Activated naive CD4-positive, alpha-beta T cell treated with anti-CD3 and anti-CD28 coated beads for 36 hours (primary cell): ENCODE measurements at regions of chr12 and their contacts with region 1.

Region 1: GRCh38 chr12:6533923-6534694 is at the start of gene GAPDH:
- DNase-seq: peak; percentile 90
- H3K4me3 Mint-ChIP-seq: peak within 1 kb of the TSS; percentile 94
- H3K27ac Mint-ChIP-seq: peak within 1 kb of the TSS; percentile 99
- H3K4me1 Mint-ChIP-seq: peaks cover 41% of the 10 kb centered on the region
- H3K27me3 Mint-ChIP-seq: no peaks in the 10 kb centered on the region
- total RNA-seq, gene GAPDH: 6,537 to 6,787 TPM

Region 2: GRCh38 chr12:5614256-5614655 is 919.9 kb before region 1 on chr12:
- CTCF ChIA-PET with region 1: no interaction called
- intact Hi-C with region 1: no loop called
- DNase-seq: no peak
- H3K4me3 Mint-ChIP-seq: no peak overlapping the region
- H3K27ac Mint-ChIP-seq: no peak overlapping the region
- H3K4me1 Mint-ChIP-seq: no peaks in the 10 kb centered on the region
- H3K27me3 Mint-ChIP-seq: peaks cover 2% of the 10 kb centered on the region

Region 3: GRCh38 chr12:6430124-6430989 is 103.8 kb before region 1 on chr12:
- CTCF ChIA-PET with region 1: interaction called, 35 read pairs
- intact Hi-C with region 1: loop called (anchors 1 kb)
- DNase-seq: peak; percentile 78
- H3K4me3 Mint-ChIP-seq: peak overlapping the region; percentile 46
- H3K27ac Mint-ChIP-seq: peak overlapping the region; percentile 84
- H3K4me1 Mint-ChIP-seq: peaks cover 85% of the 10 kb centered on the region
- H3K27me3 Mint-ChIP-seq: no peaks in the 10 kb centered on the region

Region 4: GRCh38 chr12:6470375-6471163 is 63.5 kb before region 1 on chr12 and contains the start of gene VAMP1:
- CTCF ChIA-PET with region 1: interaction called, 6 read pairs
- intact Hi-C with region 1: loop called (anchors 1 kb)
- DNase-seq: peak; percentile 99
- H3K4me3 Mint-ChIP-seq: peak within 1 kb of the TSS; percentile 91
- H3K27ac Mint-ChIP-seq: peak within 1 kb of the TSS; percentile 90
- H3K4me1 Mint-ChIP-seq: peaks cover 53% of the 10 kb centered on the region
- H3K27me3 Mint-ChIP-seq: no peaks in the 10 kb centered on the region
- total RNA-seq, gene VAMP1: 31.9 to 33.5 TPM

Region 5: DNA sequence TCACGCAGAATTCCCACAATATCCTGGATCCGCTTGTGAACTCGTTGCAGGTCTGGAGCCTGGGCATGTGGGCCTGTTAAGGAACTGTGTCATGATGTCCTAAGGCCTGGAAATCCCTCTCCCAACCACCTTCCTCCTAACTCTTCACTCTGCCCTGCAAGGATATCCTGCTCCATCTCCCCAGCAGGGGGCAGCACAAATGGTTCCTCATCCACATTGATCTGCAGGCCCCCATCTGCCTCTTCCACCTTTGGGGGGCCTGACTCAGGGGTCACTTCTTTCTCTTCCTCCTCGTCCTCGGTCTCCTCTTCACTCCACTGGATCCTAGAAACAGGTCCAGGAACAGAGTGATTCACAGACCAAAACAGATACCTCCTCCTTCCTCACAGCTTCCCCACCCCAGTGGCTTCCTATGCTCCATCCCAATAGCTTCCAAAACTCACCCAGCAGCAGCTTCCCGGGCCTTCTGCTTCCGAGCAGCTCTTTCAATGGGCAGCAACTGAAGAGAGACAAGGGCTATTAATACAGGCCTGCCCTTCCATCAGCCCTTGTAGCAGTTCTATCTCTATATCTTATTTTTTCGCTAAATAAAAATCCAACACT is 29.4 kb after region 1 on chr12:
- CTCF ChIA-PET with region 1: interaction called, 15 read pairs
- intact Hi-C with region 1: loop called (anchors 1 kb)
- DNase-seq: peak; percentile 79
- H3K4me3 Mint-ChIP-seq: no peak overlapping the region
- H3K27ac Mint-ChIP-seq: peak overlapping the region; percentile 36
- H3K4me1 Mint-ChIP-seq: peaks cover 39% of the 10 kb centered on the region
- H3K27me3 Mint-ChIP-seq: no peaks in the 10 kb centered on the region

Region 6: DNA sequence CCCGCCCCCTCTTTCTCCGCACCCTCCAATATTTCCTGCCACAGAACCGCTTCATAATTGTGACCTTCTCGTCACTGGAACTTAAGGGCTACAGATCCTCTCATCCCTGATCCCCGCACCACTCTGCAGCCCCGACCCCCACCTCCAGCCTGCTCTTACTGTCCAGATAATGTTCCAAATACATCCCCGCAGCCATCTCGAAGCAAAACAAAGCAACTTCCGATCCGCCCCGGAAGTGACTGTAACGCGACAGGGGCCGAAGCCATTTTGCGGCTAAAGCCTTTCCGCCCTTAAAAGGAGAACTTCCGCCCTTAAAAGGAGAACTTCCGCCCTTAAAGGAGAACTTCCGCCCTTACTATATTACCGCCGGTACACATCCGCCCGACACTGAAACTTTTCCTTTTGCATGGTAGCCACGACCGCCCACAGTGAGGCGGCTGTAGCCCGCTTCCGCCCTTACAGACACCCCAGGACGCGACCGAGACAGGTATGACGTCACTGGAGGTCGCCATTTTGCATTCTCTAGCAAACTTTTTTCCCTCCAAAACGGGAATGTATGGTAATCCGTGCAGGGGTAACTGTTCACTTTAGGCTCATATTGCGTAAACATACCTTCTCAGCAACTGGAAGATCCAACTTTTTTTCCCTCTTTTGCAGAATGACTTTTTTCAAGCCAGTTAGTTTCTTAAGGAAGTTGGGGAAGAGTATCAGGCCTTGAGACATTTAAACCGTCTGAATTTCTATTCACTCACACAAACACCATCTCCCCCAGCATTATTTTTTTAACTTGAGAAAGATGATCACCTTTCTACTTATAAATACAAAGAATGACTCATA is 129.0 kb after region 1 on chr12 and contains the start of gene ING4:
- CTCF ChIA-PET with region 1: no interaction called
- intact Hi-C with region 1: loop called (anchors 1 kb)
- DNase-seq: peak; percentile 99
- H3K4me3 Mint-ChIP-seq: peak within 1 kb of the TSS; percentile 86
- H3K27ac Mint-ChIP-seq: peak within 1 kb of the TSS; percentile 88
- H3K4me1 Mint-ChIP-seq: peaks cover 25% of the 10 kb centered on the region
- H3K27me3 Mint-ChIP-seq: no peaks in the 10 kb centered on the region
- total RNA-seq, gene ING4: 17.3 to 17.8 TPM